ENCODE measurements at regions of chr22 and their contacts with region 1.

Region 1: DNA sequence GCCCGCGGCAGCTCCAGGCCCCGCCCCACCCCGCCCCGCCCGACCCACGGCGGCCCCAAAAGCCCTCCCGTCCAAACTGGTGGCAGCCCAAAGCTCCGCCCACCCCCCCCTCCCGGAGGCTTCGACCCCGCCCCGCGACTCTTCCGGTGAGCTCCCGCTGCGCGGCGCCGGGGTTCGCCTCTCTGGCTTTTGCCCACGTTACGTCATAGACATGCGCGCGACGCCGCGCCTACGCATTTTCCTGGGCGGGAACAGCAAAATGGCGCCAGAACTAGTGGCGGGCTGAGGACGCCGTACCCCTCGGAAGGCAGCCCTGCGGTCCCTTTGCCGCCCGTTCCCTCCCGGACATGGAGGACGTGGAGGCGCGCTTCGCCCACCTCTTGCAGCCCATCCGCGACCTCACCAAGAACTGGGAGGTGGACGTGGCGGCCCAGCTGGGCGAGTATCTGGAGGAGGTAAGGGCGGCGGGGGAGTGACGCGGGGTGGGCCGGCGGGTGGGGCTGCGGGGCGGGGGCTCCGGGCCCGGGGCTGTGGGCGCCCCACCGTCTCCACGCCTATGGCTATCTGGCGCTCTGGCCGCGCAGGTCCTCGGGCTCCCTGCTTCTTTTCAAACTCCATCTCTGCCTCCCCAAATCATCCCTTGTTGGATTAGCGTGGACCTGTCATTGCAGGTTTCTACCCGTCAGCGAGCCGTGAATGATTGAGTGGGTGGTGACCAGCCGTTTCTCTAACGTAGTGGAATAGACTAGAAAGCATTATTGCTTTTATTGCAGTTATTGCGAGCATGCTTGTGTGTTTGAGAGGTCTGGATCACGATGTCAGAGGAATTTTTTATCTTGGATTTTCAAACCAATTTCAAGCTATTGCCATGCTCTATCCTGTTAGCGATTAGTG is at the start of gene NCAPH2:
- DNase-seq: peak; percentile 96 to 99 (median 98)
- ATAC-seq: peak; percentile 81
- H3K4me3 ChIP-seq: peak within 1 kb of the TSS; percentile 88 to 90
- H3K27ac ChIP-seq: peak within 1 kb of the TSS; percentile 82 to 90
- H3K4me1 ChIP-seq: peaks cover 17 to 36% of the 10 kb centered on the region in 2 donors
- H3K27me3 ChIP-seq: no peaks in the 10 kb centered on the region
- CTCF ChIP-seq: no peak
- polyA plus RNA-seq, gene NCAPH2: 41.6 to 52.9 (median 44.7) TPM

Region 2: DNA sequence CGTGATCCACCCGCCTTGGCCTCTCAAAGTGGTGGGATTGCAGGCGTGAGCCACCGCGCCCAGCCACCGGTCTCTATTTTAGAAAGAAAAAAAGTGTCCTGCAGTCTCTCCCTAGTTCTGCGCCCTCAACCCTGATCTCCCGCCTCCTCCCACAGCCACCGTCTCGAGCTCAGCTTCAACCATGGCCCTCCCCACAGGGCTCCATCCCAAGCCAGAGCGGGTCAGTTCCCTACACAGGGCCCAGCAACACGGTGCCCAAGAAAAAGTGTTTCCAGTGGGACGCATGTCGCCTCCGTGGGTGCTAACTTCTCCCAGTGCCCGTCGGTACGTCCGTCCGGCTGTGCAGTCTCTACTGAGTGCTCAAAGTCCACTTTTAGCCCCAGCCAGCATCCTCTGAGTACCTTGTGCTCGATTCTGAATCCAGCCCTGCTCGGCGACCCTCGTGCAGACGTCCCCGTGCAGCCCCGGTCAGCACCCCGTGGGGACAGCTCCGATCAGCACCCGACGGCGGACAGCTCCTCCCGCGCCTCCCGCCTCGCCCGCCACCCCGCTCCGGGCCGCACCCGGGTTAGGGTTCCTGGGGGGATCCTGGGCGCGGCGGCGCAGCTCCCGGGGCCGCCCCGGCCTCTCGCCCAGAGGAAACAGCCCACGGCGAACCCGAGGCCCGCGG is 91.7 kb after region 1 on chr22:
- intact Hi-C with region 1: loop called in 1 of 2 experiments (anchors 10 kb)
- DNase-seq: peak in 3 of 4 donors; percentile 64 to 87 (median 65)
- ATAC-seq: peak; percentile 93
- H3K4me3 ChIP-seq: peak overlapping the region; percentile 13 to 38
- H3K27ac ChIP-seq: no peak overlapping the region
- H3K4me1 ChIP-seq: peaks cover 0 to 10% of the 10 kb centered on the region in 2 donors
- H3K27me3 ChIP-seq: peaks cover 28 to 70% of the 10 kb centered on the region in 2 donors
- CTCF ChIP-seq: no peak

Measured in left lung (tissue), 14 donors.